Breast epithelium (tissue), 4 donors: ENCODE measurements at regions of chr2 and their contacts with region 1.

Region 1: GRCh38 chr2:42693013-42693615 is 70.8 kb downstream of the OXER1 start:
- DNase-seq: no peak
- H3K4me3 ChIP-seq: no peak overlapping the region
- H3K27ac ChIP-seq: no peak overlapping the region
- H3K4me1 ChIP-seq: no peaks in the 10 kb centered on the region
- H3K27me3 ChIP-seq: no peaks in the 10 kb centered on the region
- CTCF ChIP-seq: no peak
- POLR2A ChIP-seq: no peak

Region 2: GRCh38 chr2:42675815-42676214 is 17.3 kb before region 1 on chr2:
- intact Hi-C with region 1: loop called (anchors 1 kb)
- DNase-seq: no peak
- H3K4me3 ChIP-seq: no peak overlapping the region
- H3K27ac ChIP-seq: no peak overlapping the region
- H3K4me1 ChIP-seq: no peaks in the 10 kb centered on the region
- H3K27me3 ChIP-seq: no peaks in the 10 kb centered on the region
- CTCF ChIP-seq: no peak
- POLR2A ChIP-seq: no peak

Region 3: DNA sequence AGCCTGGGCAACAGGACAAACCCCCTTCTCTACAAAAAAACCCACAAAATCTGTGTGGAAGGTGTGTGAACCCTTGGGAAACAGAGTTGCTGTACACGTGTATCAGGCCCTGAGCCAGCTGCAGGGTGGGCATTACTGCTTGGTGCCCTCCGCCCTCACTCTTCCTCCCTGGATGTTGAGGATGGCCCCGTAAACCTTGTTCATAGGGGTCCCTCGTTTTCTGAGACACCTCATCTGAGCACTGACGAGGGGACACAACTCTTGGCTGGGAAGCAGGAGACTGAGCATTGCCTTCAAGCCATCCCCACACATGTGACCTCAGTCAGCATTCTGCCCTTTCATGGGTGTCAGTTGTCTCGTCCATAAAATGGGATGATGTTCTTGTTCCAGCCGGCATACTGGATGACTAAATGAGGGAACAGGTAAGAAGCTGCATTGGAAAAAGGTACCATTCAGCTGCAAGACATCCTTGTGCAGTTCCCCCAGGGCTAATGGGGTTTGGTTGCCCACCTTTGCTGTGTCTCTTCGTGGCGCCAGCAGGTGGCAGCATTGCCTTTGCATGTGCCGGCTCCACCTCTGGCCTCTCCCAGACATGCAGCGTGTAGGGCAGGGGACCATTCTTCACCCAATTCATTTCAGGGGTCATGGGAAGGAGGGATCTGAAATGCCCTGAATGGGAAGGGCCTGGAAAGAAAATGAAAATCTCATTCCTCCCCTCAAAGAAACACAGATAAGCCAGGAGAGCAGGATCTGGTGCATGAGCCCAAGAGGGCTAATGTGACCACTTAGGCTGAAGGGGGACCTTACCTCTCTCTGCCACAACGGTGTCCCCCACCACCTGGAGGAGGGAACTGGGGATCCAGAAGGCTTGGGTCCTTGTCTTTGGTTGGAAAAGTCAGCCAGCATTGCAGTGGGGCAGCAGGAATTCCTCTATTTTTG is 135.6 kb after region 1 on chr2:
- intact Hi-C with region 1: no loop called
- DNase-seq: peak in 1 of 2 donors; percentile 68
- H3K4me3 ChIP-seq: peak overlapping the region in 1 of 3 donors; percentile 63
- H3K27ac ChIP-seq: peak overlapping the region; percentile 52 to 85
- H3K4me1 ChIP-seq: peaks cover 4 to 20% of the 10 kb centered on the region in 2 donors
- H3K27me3 ChIP-seq: no peaks in the 10 kb centered on the region
- CTCF ChIP-seq: peak; percentile 94 to 95 (median 94)
- POLR2A ChIP-seq: no peak